GM12878 (cell line): ENCODE measurements at regions of chr2 and their contacts with region 1.

Region 1: DNA sequence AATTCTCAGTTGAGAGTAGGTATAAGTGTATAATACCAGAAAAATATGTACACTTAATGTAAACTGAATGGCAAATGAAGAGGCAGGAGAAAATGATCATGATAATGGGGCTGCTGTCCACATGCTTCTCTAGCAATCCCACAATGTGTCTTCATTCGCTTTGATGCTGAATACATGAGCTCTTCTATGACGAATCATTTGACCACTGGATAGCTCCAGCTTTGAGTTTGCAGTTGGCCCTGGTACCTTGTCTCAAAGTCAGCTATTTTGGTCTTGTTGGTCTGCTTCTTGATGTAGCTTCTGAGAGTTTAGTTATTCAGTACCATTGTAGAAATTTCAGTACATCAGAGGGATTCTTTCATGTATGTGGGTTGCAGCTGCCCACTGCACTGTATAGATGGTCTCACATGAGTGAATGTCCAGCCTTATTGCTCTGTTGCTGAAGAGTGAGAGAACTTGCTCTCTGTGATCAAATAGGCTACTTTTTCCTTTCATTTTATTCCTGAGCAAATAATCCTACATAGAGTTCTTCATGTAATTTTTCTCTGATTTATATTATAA is 105.1 kb downstream of the TTC27 start:
- DNase-seq: no peak
- ATAC-seq: peak; percentile 73
- H3K4me3 ChIP-seq: no peak overlapping the region
- H3K27ac ChIP-seq: no peak overlapping the region
- H3K4me1 ChIP-seq: no peaks in the 10 kb centered on the region
- H3K27me3 ChIP-seq: no peaks in the 10 kb centered on the region
- CTCF ChIP-seq: no peak
- EP300 ChIP-seq: no peak
- POLR2A ChIP-seq: no peak
- RAD21 ChIP-seq: no peak

Region 2: DNA sequence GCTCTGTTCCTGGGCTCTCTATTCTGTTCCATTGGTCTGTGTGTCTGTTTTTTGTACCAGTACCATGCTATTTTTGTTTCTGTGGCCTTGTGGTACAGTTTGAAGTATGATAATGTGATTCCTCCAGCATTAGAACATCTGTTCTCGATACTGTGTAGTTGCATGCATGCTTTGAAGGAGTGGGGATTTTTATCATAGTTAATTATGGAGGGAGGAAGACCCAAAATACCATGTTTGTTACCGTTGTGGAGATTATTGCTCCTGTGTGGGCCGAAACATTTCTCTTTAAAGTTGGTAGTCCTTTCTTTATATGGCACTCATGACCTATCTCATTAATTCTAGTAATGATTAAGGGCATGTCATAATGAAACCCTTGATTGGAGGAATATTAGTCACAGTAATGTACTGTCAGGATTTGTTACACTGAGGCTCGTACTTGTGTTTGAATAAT is 17.6 kb before region 1 on chr2:
- CTCF ChIA-PET with region 1: interaction called, 6 read pairs
- POLR2A ChIA-PET with region 1: interaction called, 4 read pairs
- RAD21 ChIA-PET with region 1: no interaction called
- SMC1A ChIA-PET with region 1: interaction called, 40 read pairs
- in situ Hi-C with region 1: no loop called
- intact Hi-C with region 1: no loop called
- DNase-seq: peak; percentile 60
- ATAC-seq: peak; percentile 92
- H3K4me3 ChIP-seq: no peak overlapping the region
- H3K27ac ChIP-seq: peak overlapping the region; percentile 43
- H3K4me1 ChIP-seq: no peaks in the 10 kb centered on the region
- H3K27me3 ChIP-seq: no peaks in the 10 kb centered on the region
- CTCF ChIP-seq: no peak
- EP300 ChIP-seq: peak; percentile 57 to 77; a peak in 3 of 4 replicates
- POLR2A ChIP-seq: no peak
- RAD21 ChIP-seq: no peak

Region 3: DNA sequence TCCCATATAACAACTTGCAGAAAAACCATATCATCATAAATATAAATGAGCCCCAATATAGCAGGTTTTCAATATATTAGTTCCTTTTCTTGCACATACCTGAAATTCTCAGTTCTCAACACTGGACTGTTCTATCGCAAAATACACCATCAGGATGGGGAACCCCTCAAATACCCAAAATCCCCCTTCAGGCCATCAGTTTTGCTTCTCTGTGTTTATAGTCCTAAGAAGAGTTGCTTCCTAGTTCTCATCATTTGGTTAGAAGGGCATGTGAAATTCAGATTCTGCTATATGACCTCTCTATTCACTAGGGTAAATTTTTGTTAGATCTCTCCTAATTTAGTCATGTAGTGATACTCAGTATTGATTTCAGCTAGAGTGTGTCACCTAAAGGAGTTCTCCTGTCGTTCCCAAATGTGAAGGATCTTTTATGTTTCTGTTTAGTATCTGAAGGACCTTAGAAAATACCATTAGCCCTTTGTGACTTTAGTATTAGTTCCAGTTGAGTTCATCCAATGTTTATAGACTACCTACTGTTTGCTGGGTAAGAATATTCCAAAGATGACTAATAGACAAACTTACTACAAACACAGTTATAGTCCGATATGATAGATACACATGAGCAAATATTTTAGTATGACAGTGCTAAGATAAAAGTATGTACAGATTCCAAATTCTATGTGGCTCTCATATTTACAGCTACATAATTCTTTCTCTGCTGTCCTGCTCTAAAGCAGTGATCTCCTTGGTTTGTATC is 10.7 kb after region 1 on chr2:
- CTCF ChIA-PET with region 1: no interaction called
- POLR2A ChIA-PET with region 1: no interaction called
- RAD21 ChIA-PET with region 1: no interaction called
- SMC1A ChIA-PET with region 1: interaction called, 11 read pairs
- in situ Hi-C with region 1: no loop called
- intact Hi-C with region 1: no loop called
- DNase-seq: peak; percentile 28
- ATAC-seq: peak; percentile 91
- H3K4me3 ChIP-seq: no peak overlapping the region
- H3K27ac ChIP-seq: peak overlapping the region; percentile 35
- H3K4me1 ChIP-seq: peaks cover 6% of the 10 kb centered on the region
- H3K27me3 ChIP-seq: no peaks in the 10 kb centered on the region
- CTCF ChIP-seq: no peak
- EP300 ChIP-seq: no peak
- POLR2A ChIP-seq: no peak
- RAD21 ChIP-seq: no peak